ENCODE measurements at regions of chr12 and their contacts with region 1.

Region 1: DNA sequence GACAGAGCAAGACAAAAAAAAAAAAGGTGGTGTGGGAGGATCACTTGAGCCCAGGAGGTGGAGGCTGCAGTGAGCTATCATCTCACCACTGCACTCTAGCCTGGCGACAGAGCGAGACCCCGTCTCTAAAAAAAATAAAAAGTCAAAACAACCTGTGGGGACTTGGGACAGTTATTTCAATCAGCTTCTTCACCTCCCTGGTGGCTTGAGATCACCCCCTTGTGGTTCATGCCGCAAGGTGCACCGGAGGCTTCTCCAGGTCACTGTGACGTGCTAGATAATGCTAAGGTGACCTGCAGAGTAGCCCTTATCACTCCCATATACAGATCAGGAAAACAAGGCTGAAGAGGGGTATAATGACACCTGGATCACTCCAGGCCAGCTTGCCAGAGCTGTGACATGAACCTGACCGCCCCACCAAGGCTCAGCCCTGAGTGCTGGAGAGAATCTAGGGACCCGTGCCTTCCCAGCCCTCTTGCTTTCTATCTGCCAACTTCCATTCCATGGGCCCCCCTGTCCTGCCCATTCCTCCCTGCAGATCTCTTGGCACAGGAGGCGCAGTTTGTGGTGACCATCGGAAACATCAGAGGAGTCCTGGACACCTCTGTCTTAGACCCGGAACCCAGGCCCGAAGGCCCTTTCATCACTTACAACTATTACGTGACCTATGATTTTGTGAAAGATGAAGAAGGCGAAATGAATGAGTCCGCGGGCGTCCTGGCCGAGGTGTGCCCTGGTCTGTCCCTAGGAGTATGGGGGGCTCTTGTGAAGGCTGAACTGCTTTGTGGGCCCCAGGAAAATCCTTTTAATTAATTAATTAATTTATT is 8.1 kb downstream of the LRRC43 start:
- DNase-seq: peak; percentile 84
- H3K4me3 Mint-ChIP-seq: no peak overlapping the region
- H3K27ac Mint-ChIP-seq: no peak overlapping the region
- H3K4me1 Mint-ChIP-seq: no peaks in the 10 kb centered on the region
- H3K27me3 Mint-ChIP-seq: peaks cover 40% of the 10 kb centered on the region

Region 2: GRCh38 chr12:122130150-122130549 is 60.9 kb before region 1 on chr12:
- CTCF ChIA-PET with region 1: interaction called, 20 read pairs
- DNase-seq: no peak
- H3K4me3 Mint-ChIP-seq: no peak overlapping the region
- H3K27ac Mint-ChIP-seq: no peak overlapping the region
- H3K4me1 Mint-ChIP-seq: peaks cover 3% of the 10 kb centered on the region
- H3K27me3 Mint-ChIP-seq: no peaks in the 10 kb centered on the region